Posterior vena cava (tissue), 2 donors: ENCODE measurements at regions of chr11 and their contacts with region 1.

Region 1: DNA sequence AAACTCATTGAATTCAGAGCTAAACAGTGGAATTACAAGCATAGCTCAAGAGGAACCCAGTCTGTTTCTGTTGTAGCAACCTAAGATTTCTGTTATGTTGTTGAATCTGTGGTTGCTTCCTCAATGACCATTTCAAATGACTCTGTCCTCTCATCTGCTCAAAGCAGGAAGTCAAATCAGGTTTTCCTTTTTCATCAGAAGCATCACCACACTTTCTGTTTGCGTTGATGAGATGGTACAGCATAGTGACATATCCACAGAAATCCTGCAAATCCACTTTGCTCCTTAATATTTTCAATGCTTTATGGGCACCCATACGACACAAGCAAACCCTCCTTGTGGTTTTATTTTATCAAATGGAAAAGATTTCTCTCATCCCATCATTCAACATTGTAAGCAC is 12.6 kb upstream of the UCP2 start:
- DNase-seq: no peak

Region 2: DNA sequence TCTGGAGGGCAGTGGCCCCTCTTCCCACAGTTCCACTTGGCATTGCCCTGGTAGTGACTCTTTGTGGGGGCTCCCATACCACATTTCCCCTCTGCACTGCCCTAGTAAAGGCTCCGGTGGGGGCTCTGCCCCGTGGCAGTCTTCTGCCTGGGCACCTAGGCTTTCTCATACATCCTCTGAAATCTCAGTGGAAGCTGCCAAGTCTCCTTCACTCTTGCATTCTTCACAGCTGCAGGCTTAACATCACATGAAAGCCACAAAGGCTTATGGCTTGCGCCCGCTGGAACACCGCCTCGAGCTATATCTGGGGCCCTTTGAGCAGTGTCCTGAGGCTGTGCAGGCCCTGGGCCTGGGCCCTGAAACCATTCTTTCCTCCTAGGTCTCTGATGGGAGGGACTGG is 323.5 kb before region 1 on chr11:
- intact Hi-C with region 1: no loop called
- DNase-seq: no peak

Region 3: DNA sequence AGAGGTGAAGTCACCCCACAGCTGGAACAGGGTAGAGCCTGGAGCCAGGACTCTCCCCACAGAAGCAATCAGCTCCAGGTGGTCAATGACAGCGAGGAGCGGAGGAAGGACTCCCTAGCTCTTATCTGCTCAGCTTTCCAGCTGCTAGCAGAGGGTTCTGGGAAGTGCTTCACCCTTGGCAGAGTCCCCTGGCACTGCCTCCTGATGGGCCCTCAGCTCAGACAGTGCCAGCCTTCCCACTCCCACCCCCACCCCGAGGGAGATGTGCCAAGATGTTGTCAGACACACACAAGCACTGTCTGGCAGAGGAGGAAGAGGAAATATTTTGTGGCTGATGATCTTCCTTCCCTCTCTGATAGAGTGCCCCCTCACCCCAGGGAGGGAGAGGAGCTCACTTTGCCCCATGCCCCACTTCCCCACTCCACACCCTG is 1199.9 kb after region 1 on chr11:
- intact Hi-C with region 1: loop called in 1 of 2 experiments (anchors 5 kb)
- DNase-seq: peak; percentile 86